ENCODE measurements at regions of chr1 and their contacts with region 1.

Region 1: DNA sequence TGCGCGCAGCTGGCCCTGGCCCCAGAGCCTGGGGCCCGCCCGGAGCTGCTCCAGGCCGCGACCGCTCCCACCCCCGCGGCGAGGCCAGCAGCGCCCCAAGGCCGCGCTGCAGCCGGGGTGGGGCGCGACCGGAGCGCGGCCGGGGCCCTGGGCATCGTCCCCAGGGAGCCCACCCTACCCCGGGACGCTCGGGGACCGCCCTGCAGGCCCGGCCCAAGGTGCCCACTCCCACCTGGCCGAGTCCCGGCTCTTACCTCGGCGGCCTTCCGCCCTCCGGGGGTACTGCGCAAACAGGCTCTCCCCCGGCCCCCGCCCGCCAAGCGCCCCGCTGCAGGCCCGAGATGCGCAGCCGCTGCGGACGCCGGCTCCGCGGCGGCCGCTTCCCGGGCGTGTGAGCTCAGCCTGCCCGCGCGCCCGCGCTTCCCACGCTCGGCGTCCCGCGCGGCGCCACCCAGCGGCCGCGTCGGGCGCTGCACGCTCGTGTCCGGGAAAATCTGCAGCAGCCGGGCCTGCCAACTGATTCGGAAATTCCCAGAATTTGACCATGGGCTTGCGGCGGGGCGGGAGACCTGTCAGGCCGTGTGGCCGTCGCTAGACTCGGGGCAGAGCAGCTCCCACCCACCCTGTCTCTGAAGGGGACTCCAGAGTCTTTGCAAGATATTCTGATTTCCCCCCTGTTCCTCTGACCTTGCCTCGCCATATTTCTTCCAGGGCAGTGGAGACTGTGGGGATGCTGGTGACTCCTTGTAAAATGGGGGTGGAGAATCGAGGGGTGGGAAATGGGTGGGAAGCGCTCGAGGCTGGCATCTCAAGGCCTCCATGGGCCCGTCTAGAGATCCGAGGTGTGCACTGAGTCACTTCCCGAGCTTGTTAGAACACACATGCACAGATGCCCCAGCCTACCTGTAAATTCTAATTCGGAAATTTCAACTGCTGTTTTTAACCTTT is 41.9 kb downstream of the CD34 start:
- DNase-seq: peak; percentile 88
- ATAC-seq: peak; percentile 52
- H3K4me3 Mint-ChIP-seq: peak overlapping the region; percentile 95
- H3K27ac Mint-ChIP-seq: peak overlapping the region; percentile 94
- H3K4me1 Mint-ChIP-seq: peaks cover 67% of the 10 kb centered on the region
- H3K27me3 Mint-ChIP-seq: no peaks in the 10 kb centered on the region

Region 2: DNA sequence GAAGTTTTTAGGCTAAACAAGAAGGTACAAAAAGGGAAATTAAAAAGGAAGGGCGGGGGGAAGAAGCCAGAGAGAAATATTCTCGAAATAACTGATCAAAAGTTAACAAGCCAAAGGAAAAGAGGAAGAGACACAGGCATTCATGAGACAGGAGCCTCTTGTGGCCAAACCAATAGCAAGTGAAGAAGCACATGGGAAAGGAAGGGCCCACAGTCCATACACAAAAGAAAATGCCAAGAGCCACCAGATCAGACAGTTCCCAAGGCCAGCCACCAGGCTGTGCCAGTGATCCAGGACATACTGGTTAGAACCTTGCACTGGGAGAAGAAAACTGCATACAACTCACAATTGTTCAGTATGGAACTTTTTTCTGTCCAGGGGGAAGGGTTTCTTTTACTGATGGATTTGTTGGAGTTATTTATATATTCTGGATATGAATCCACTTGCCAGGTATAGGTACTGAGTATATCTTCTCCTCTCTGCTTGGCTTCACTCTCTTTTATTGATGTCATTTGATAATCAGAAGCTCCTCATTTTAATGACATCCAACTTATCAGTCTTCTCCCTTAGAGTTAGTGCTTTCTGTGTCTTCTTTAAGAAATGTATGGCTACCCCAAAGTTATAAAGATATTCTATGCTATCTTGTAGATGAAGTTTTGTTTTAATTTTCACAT is 40.4 kb before region 1 on chr1:
- POLR2A ChIA-PET with region 1: interaction called, 153 read pairs
- DNase-seq: peak; percentile 58
- ATAC-seq: no peak
- H3K4me3 Mint-ChIP-seq: no peak overlapping the region
- H3K27ac Mint-ChIP-seq: peak overlapping the region; percentile 15
- H3K4me1 Mint-ChIP-seq: peaks cover 69% of the 10 kb centered on the region
- H3K27me3 Mint-ChIP-seq: no peaks in the 10 kb centered on the region

Region 3: DNA sequence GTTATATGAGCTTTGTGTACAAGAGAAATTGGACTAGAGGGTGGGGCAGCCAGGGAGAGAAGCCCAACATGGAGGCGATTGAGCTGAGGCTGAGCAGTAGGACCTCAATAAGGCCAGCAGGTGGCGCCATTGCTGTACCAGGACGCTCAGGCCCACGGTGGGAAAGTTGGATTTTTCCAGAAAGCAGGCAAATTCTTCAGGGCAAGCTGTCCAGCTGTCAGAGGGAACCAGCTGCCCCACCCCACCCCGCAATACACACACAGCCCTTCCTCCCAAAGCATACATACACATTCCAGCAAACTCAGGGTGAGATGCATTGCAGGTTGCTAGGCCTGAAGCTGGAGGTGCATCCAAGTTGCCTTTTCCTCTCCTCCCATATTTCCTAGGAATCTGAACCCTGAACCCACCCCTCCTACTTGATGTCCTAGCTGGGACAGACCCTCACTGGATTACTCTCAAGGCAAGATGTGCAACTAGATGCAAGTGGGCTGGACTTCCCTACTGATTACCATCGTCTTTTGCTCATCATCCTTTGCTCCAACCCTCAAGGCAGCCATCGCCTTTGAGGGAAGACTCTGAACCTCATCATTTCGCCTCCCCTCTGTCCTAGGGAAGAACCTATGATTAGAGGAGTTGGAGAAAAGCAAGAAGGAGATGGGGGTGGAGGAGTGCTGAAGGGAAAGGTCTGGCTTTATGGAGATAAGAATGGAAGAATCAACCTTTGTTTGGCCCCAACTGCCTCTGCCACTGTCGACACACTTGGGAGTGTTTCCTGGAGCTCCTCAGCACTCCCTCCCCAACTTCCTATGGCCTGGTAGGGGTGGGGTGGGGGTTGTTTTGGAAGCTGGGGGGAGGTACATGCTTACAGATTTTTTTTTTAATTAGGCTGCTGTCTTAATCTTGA is 16.3 kb after region 1 on chr1:
- POLR2A ChIA-PET with region 1: interaction called, 30 read pairs
- DNase-seq: peak; percentile 75
- ATAC-seq: peak; percentile 62
- H3K4me3 Mint-ChIP-seq: no peak overlapping the region
- H3K27ac Mint-ChIP-seq: peak overlapping the region; percentile 96
- H3K4me1 Mint-ChIP-seq: peaks cover 31% of the 10 kb centered on the region
- H3K27me3 Mint-ChIP-seq: peaks cover 2% of the 10 kb centered on the region

Region 4: DNA sequence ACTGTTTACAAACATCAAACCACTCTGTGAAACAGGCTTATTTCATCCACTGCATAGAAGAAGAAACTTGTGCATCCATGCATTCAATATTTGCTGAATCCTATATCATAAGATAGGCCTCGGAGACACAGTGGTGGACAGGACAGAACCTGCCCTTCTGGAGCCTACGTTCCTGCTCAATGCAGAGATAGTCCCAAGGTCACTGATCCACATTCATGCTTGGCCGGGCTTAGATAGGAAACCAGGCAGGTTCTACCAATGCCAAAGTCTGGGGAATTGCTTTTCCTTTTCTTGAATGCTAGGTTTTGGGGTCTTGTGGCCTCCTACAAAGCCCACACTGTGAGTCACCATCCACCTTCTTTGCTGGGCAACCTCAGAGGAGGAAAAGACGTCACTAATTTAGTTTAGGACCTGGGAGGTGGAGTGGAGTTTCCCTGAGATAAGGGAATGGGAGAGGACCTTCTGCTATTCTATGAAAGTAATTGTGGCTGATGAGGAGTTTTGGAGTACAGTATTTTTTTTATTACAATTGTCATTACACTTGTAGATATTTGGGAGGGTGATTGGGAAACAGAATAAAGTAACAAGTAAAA is 141.5 kb after region 1 on chr1:
- POLR2A ChIA-PET with region 1: no interaction called
- DNase-seq: no peak
- ATAC-seq: no peak
- H3K4me3 Mint-ChIP-seq: no peak overlapping the region
- H3K27ac Mint-ChIP-seq: no peak overlapping the region
- H3K4me1 Mint-ChIP-seq: no peaks in the 10 kb centered on the region
- H3K27me3 Mint-ChIP-seq: peaks cover 5% of the 10 kb centered on the region